Caco-2 (cell line): ENCODE measurements at regions of chr2 and their contacts with region 1.

Region 1: GRCh38 chr2:112433932-112434730 is 686 bp upstream of the RGPD8 start:
- DNase-seq: no peak
- H3K4me3 ChIP-seq: no peak overlapping the region
- H3K4me3 Mint-ChIP-seq: peak overlapping the region; percentile 63
- H3K27ac Mint-ChIP-seq: no peak overlapping the region
- H3K4me1 ChIP-seq: no peaks in the 10 kb centered on the region
- H3K4me1 Mint-ChIP-seq: peaks cover 6% of the 10 kb centered on the region
- H3K27me3 ChIP-seq: no peaks in the 10 kb centered on the region
- H3K27me3 Mint-ChIP-seq: no peaks in the 10 kb centered on the region
- CTCF ChIP-seq: no peak

Region 2: GRCh38 chr2:112254466-112255239 is 179.5 kb before region 1 on chr2 and contains the start of gene ZC3H8:
- CTCF ChIA-PET with region 1: interaction called, 10 read pairs
- POLR2A ChIA-PET with region 1: no interaction called
- intact Hi-C with region 1: loop called (anchors 5 kb)
- DNase-seq: peak; percentile 94 to 97
- H3K4me3 ChIP-seq: peak within 1 kb of the TSS; percentile 91
- H3K4me3 Mint-ChIP-seq: peak within 1 kb of the TSS; percentile 78
- H3K27ac Mint-ChIP-seq: peak within 1 kb of the TSS; percentile 63
- H3K4me1 ChIP-seq: peaks cover 10% of the 10 kb centered on the region; the same call in 1 of the 2 replicates
- H3K4me1 Mint-ChIP-seq: peaks cover 4% of the 10 kb centered on the region
- H3K27me3 ChIP-seq: no peaks in the 10 kb centered on the region
- H3K27me3 Mint-ChIP-seq: no peaks in the 10 kb centered on the region
- CTCF ChIP-seq: no peak
- total RNA-seq, gene ZC3H8: 17.6 and 19.9 TPM in 2 replicates

Region 3: DNA sequence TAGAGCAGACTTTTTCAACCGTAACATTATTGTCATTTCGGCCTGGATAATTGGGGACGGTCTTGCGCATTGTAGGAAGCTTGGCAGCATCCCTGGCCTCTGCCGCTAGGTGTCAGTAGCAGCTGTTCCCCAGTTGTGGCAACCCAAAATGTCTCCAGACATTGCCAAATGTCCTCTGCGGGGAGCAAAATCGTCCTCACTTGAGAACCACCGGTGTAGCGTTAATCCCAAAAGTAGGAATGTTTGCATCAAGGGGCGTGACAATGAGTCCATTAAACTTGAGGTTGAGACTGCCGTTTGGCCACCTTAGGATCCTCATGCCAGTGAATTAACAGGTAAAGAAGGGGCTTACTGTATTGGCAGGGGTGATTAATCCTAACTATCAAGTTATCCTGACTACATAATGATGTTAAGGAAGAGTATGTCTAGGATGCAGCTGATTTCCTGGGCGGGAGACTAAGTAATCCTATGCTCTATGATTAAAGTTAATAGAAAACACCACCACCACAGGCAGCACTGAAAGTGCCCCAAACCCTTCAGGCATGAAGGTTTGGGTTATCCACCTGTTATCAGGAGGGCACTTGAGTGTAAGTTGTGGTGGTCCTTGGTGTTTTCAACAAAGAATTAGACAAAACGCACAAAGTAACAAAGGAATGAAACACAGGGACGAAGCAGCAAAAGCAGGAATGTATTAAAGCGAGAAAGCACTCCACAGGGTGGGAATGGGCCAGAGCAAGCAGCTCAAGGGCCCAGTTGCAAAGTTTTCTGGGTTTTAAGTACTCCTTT is 174.4 kb before region 1 on chr2:
- CTCF ChIA-PET with region 1: interaction called, 10 read pairs
- POLR2A ChIA-PET with region 1: no interaction called
- intact Hi-C with region 1: loop called (anchors 5 kb)
- DNase-seq: peak; percentile 79 to 84
- H3K4me3 ChIP-seq: 0 out of 2 replicates have a peak overlapping the region, but pooled peaks have one; percentile 15
- H3K4me3 Mint-ChIP-seq: peak overlapping the region; percentile 49
- H3K27ac Mint-ChIP-seq: no peak overlapping the region
- H3K4me1 ChIP-seq: 0 out of 2 replicates have a peak, but pooled peaks cover 3% of the 10 kb centered on the region
- H3K4me1 Mint-ChIP-seq: peaks cover 5% of the 10 kb centered on the region
- H3K27me3 ChIP-seq: no peaks in the 10 kb centered on the region
- H3K27me3 Mint-ChIP-seq: no peaks in the 10 kb centered on the region
- CTCF ChIP-seq: peak; percentile 91 to 97